ENCODE measurements at regions of chr16 and their contacts with region 1.

Region 1: DNA sequence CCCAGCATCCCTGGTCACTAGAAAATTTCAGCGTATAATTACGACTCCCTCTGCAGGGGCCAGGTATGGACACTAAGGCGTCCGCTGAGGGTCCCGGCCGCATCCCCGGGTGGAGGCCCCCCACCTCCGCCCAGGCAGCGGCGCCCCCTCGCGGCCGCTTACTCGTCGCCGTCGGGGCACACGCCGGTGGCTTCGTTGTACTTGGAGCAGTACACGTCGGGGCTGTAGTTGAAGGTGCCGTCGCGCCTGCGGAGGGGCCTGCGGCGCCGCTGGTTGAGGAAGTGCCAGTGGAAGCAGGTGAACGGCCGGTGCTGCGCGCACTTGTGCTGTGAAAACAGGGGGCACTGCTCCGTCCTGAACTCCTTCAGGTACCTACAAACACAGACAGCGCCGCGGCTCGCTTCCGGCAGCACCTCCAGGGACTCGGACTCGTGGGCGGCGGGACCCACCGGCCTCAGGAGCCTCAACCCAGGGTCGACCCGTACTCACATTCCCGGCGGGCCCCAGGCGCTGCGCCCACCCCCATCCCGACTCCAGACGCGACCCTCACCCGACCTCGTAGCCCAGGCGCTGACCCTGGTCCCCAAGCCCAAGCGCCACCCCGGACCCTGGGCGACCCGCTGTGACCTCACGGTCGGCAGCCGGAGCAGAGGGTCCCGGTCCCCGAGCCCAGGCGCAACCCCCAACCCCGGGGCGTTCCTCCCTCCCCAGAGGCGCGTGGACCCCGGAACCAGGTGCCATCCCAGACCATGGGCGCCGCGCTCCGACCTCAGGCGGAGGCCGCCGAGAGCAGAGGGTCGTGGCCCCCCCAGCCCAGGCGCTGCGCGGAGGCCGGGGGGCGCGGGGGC is 596 bp downstream of the UNKL start:
- DNase-seq: peak; percentile 45 to 82 (median 62)
- ATAC-seq: peak; percentile 63
- H3K4me3 ChIP-seq: peak overlapping the region; percentile 77
- H3K4me3 Mint-ChIP-seq: peak overlapping the region; percentile 90
- H3K27ac ChIP-seq: peak overlapping the region in 1 of 2 donors; percentile 77
- H3K27ac Mint-ChIP-seq: peak overlapping the region; percentile 85
- H3K4me1 ChIP-seq: peaks cover 29% of the 10 kb centered on the region
- H3K4me1 Mint-ChIP-seq: peaks cover 21% of the 10 kb centered on the region
- H3K27me3 ChIP-seq: no peaks in the 10 kb centered on the region
- H3K27me3 Mint-ChIP-seq: no peaks in the 10 kb centered on the region
- CTCF ChIP-seq: peak; percentile 65

Region 2: DNA sequence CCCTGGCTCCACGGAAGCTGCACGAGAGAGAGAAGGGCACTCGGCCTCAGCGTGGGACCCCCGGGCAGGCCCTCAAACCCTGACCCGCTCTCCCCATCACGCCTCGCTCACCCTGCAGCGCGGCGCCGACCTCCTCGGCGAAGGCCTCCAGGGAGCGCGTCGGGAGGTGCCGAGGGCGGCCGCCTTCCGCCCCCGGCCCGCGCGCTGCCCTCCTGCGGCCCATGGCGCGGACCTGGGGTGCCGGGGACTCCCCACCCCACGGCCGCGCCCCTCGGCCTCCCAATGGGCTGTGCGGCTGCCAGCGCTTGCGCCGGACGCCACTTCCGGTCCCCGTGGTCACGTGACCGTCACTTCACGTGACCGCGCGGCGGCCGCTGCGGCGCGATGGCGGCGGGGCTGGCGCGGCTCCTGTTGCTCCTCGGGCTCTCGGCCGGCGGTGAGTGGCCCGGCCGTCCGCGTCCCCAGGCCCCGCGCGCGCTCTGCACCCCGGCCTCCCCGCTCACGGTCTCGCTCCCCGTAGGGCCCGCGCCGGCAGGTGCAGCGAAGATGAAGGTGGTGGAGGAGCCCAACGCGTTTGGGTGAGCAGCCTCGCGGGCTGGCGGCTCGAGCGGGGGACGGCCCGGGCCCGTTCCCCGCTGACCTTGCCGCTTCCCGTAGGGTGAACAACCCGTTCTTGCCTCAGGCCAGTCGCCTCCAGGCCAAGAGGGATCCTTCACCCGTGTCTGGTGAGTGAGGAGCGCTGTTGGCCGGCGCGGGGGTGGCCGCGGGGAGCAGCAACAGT is 62.1 kb before region 1 on chr16 and contains the starts of genes GNPTG and TSR3:
- CTCF ChIA-PET with region 1: no interaction called
- POLR2A ChIA-PET with region 1: no interaction called
- intact Hi-C with region 1: loop called in 1 of 2 experiments (anchors 5 kb)
- DNase-seq: peak; percentile 70 to 95 (median 82)
- ATAC-seq: peak; percentile 84
- H3K4me3 ChIP-seq: peak within 1 kb of the TSS; percentile 87
- H3K4me3 Mint-ChIP-seq: peak within 1 kb of the TSS; percentile 90
- H3K27ac ChIP-seq: peak within 1 kb of the TSS in 1 of 2 donors; percentile 46
- H3K27ac Mint-ChIP-seq: peak within 1 kb of the TSS; percentile 89
- H3K4me1 ChIP-seq: peaks cover 54% of the 10 kb centered on the region
- H3K4me1 Mint-ChIP-seq: peaks cover 16% of the 10 kb centered on the region
- H3K27me3 ChIP-seq: no peaks in the 10 kb centered on the region
- H3K27me3 Mint-ChIP-seq: no peaks in the 10 kb centered on the region
- CTCF ChIP-seq: no peak
- total RNA-seq, gene GNPTG: 27.6 to 32.0 TPM
- total RNA-seq, gene TSR3: 19.9 to 21.4 TPM

Region 3: DNA sequence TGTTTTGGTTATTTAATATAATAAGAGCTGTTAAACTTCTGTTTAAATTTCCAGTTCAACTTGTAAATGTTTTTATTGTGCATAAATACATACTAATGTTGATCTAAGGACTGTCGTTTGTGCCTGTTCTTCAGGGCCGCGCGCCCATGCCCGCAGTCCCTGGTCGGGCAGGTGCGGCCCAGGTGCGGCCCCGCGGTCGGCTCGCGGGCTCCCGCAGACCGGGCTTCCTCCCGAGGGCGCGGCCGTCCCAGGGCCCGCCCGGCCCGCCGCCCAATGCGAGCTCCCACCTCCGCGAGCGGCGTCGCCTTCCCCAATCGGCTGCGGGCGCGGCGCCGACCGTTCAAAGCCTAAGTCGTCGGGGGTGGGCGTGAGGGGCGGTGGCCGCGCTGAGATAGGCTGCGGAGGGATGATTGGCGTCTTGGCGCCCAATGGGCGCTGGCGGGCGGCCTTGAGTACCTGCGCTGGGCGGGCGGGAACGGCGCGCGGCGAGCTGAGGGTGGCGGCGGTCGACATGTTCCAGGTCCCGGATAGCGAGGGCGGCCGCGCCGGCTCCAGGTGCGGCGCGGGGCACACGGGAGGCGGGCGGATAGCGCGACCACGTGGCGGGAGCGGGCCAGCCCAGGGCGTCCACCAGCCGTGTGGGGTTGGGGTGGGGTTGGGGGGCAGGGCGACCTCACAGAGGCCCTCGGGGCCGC is 264.0 kb after region 1 on chr16 and contains the start of gene JPT2:
- CTCF ChIA-PET with region 1: no interaction called
- POLR2A ChIA-PET with region 1: no interaction called
- intact Hi-C with region 1: loop called in 1 of 2 experiments (anchors 2 kb)
- DNase-seq: peak; percentile 90 to 98 (median 95)
- ATAC-seq: peak; percentile 97
- H3K4me3 ChIP-seq: peak within 1 kb of the TSS; percentile 66
- H3K4me3 Mint-ChIP-seq: peak within 1 kb of the TSS; percentile 93
- H3K27ac ChIP-seq: peak within 1 kb of the TSS in 1 of 2 donors; percentile 61
- H3K27ac Mint-ChIP-seq: peak within 1 kb of the TSS; percentile 71
- H3K4me1 ChIP-seq: peaks cover 25% of the 10 kb centered on the region
- H3K4me1 Mint-ChIP-seq: peaks cover 31% of the 10 kb centered on the region
- H3K27me3 ChIP-seq: no peaks in the 10 kb centered on the region
- H3K27me3 Mint-ChIP-seq: no peaks in the 10 kb centered on the region
- CTCF ChIP-seq: no peak
- total RNA-seq, gene JPT2: 2.5 to 3.2 TPM

Region 4: GRCh38 chr16:2213817-2214720 is 800.2 kb after region 1 on chr16:
- CTCF ChIA-PET with region 1: no interaction called
- POLR2A ChIA-PET with region 1: no interaction called
- intact Hi-C with region 1: loop called in 1 of 2 experiments (anchors 10 kb)
- DNase-seq: no peak
- ATAC-seq: no peak
- H3K4me3 ChIP-seq: peak overlapping the region; percentile 34
- H3K4me3 Mint-ChIP-seq: peak overlapping the region; percentile 85
- H3K27ac ChIP-seq: peak overlapping the region in 1 of 2 donors; percentile 21
- H3K27ac Mint-ChIP-seq: peak overlapping the region; percentile 66
- H3K4me1 ChIP-seq: peaks cover 25% of the 10 kb centered on the region
- H3K4me1 Mint-ChIP-seq: peaks cover 11% of the 10 kb centered on the region
- H3K27me3 ChIP-seq: no peaks in the 10 kb centered on the region
- H3K27me3 Mint-ChIP-seq: no peaks in the 10 kb centered on the region
- CTCF ChIP-seq: no peak

Measured in CD4-positive, alpha-beta T cell (primary cell).